Natural killer cell (primary cell): ENCODE measurements at regions of chr4 and their contacts with region 1.

Region 1: DNA sequence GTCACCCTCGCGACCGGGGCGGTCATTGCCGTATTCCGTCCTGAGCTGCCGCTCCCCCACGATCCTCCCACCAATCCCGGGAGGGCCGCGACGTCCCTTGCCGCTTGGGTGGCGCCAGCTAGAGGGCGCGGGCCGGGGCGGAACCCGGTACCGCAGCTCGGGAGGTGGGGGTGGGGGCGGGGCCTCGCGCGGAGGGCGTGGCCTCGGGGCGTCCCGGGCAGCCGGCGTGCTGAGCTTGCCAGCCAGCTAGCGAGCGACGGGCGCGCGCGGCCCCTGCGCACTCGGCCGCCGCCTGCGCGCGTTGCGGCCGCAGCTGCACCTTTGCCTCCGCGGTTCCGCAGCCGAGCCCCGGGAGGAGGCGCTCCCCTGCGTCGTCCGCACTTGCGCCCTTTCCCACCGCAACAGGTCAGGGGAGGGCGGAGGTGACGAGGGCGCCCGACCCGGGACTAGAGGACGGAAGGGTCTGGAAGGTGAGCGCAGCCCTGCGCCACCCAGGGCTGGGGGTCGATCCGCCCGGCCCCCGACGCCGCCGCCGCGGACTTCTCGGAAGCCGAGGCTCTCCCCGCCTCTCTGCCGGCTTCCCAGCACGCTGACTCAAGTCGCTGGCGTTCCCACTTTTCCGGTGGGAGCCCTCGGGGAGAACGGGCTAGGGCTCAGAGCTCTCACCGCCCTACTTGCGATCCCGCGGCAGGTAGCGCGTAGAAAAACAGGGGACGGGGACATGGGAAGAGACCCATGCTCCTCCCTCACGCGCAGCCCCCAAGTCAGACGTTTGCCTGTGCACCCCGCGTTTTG is at the start of gene AFF1:
- DNase-seq: peak; percentile 81 to 96
- ATAC-seq: peak; percentile 69 to 91 (median 85)
- H3K4me3 ChIP-seq: peak within 1 kb of the TSS; percentile 84
- H3K4me3 Mint-ChIP-seq: peak within 1 kb of the TSS; percentile 98
- H3K27ac ChIP-seq: peak within 1 kb of the TSS; percentile 84
- H3K27ac Mint-ChIP-seq: peak within 1 kb of the TSS; percentile 86 to 90
- H3K4me1 ChIP-seq: peaks cover 28% of the 10 kb centered on the region
- H3K4me1 Mint-ChIP-seq: peaks cover 44 to 54% of the 10 kb centered on the region in 2 donors
- H3K27me3 ChIP-seq: no peaks in the 10 kb centered on the region
- H3K27me3 Mint-ChIP-seq: no peaks in the 10 kb centered on the region
- CTCF ChIP-seq: no peak
- total RNA-seq, gene AFF1: 87.9 to 93.4 (median 91.7) TPM

Region 2: DNA sequence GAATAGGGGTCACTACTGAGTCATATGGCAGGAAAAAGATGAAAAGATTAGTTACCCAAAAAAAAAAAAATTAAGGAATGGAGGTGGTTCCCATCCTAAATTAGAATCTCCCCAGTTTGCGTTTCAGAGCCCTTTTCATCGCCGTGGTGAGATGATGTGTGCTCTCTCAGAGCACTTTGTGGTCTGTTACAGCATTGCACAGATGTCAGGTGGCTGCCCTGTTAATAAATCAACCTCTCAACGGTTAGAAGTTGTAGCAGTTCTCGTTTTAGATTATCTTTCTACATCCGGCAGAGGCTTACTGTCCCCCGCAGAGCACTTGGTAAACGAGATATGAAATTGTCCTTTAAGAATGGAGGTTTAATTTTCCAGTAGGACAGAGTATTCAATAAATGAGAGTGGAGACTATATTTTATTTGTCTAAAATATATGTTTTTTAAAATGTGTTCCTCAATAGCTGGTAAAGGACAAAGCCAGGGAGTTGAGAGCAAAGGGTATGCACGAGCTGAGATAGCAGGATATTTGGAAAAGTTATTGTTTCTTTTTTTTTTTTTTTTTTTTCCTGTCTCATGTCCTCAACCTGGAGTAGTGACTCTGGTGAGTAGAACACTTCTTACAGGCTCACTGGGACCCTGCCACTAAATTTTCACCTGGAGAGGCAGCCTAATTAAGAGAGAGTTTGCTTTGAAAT is 26.8 kb after region 1 on chr4:
- intact Hi-C with region 1: loop called (anchors 1 kb)
- DNase-seq: peak in 1 of 2 donors; percentile 33
- ATAC-seq: peak; percentile 91 to 99 (median 94)
- H3K4me3 ChIP-seq: no peak overlapping the region
- H3K4me3 Mint-ChIP-seq: peak overlapping the region; percentile 52
- H3K27ac ChIP-seq: peak overlapping the region; percentile 25
- H3K27ac Mint-ChIP-seq: peak overlapping the region; percentile 67 to 87
- H3K4me1 ChIP-seq: peaks cover 15% of the 10 kb centered on the region
- H3K4me1 Mint-ChIP-seq: peaks cover 19 to 28% of the 10 kb centered on the region in 2 donors
- H3K27me3 ChIP-seq: no peaks in the 10 kb centered on the region
- H3K27me3 Mint-ChIP-seq: no peaks in the 10 kb centered on the region
- CTCF ChIP-seq: no peak

Region 3: DNA sequence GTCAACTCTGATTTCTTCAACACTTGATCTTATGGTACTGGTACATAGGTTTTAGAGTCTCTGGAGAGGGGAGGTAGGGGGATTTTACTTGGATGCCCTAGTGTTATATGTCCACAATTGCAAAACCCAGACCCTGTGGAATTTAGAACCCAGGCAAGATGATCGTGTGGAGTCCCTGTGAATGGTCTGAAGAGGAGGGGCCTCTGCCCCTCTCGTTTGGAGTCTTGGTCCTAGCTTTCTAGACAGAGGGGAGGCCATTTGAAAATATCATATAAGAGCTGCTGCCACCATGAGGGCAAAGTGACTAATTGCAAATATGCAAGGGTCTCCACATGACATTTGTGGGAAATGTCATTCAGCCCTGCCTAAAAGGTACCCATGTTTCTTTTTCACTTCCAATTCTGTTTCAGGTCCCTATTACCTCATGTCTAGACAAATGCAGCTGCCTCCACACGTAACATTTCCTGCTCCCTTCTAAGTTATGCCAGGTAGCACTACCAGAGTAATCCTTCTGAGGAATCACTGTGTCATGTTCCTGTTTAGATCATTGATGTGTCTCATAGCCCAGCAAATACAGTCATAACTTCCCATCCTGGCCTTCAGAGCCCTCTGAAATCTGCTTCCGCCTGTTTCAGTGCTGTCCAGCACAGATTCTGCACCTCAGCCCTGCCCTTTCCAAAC is 158.6 kb after region 1 on chr4:
- intact Hi-C with region 1: loop called (anchors 5 kb)
- DNase-seq: peak in 1 of 2 donors; percentile 73
- ATAC-seq: peak; percentile 76 to 92 (median 81)
- H3K4me3 ChIP-seq: no peak overlapping the region
- H3K4me3 Mint-ChIP-seq: no peak overlapping the region
- H3K27ac ChIP-seq: no peak overlapping the region
- H3K27ac Mint-ChIP-seq: peak overlapping the region; percentile 26 to 66
- H3K4me1 ChIP-seq: no peaks in the 10 kb centered on the region
- H3K4me1 Mint-ChIP-seq: peaks cover 20 to 24% of the 10 kb centered on the region in 2 donors
- H3K27me3 ChIP-seq: no peaks in the 10 kb centered on the region
- H3K27me3 Mint-ChIP-seq: no peaks in the 10 kb centered on the region
- CTCF ChIP-seq: peak; percentile 62

Region 4: GRCh38 chr4:87220094-87220822 is 285.3 kb after region 1 on chr4 and contains the start of gene KLHL8:
- intact Hi-C with region 1: loop called (anchors 5 kb)
- DNase-seq: peak; percentile 85 to 93
- ATAC-seq: peak; percentile 90 to 98 (median 92)
- H3K4me3 ChIP-seq: peak within 1 kb of the TSS; percentile 98
- H3K4me3 Mint-ChIP-seq: peak within 1 kb of the TSS; percentile 94
- H3K27ac ChIP-seq: peak within 1 kb of the TSS; percentile 80
- H3K27ac Mint-ChIP-seq: peak within 1 kb of the TSS; percentile 87 to 91
- H3K4me1 ChIP-seq: peaks cover 18% of the 10 kb centered on the region
- H3K4me1 Mint-ChIP-seq: peaks cover 7 to 12% of the 10 kb centered on the region in 2 donors
- H3K27me3 ChIP-seq: no peaks in the 10 kb centered on the region
- H3K27me3 Mint-ChIP-seq: no peaks in the 10 kb centered on the region
- CTCF ChIP-seq: no peak
- total RNA-seq, gene KLHL8: 8.3 to 11.2 (median 9.1) TPM

Region 5: DNA sequence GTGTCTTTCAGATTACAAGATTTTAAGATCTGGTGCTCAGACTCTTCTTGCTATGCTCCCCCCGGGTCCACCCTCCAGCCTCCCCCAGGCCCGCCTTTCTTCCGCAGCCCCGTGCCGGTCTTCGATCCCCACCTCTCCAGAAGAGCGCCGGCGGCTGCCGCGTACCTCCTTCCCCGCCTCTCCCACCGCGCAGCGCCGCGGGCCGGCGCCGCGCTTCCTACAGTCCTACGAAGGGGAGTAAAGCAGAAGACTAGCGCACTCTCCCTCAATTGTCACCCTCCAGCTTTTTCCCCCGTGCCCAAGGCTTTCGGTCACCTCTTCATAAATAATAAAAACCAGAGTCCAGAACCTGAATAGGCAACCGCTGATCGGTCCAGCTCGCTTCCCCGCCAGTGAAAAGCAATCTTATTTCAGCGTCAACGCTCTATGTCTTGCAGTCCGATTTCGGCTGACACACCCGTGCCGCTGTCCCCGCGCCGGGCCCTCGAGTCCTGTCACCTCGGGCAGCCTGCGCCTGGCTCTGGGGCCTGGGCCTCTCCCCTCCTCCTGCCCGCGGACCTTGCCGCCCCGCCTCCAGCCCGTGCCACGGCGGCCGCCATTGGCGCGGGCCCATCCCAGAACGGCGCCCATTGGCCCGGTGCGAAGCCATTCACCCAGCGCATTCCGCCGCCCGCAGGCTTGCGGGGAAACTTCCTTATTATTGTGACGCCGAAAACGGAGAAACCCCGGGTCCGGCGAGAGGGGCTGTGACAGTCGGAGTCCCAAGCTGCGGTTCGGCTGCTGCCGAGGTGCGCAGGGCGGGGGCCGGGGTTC is 1657.0 kb after region 1 on chr4 and contains the start of gene HERC3:
- intact Hi-C with region 1: loop called (anchors 5 kb)
- DNase-seq: peak; percentile 91 to 93
- ATAC-seq: peak; percentile 85 to 97 (median 91)
- H3K4me3 ChIP-seq: peak within 1 kb of the TSS; percentile 100
- H3K4me3 Mint-ChIP-seq: peak within 1 kb of the TSS; percentile 96
- H3K27ac ChIP-seq: peak within 1 kb of the TSS; percentile 90
- H3K27ac Mint-ChIP-seq: peak within 1 kb of the TSS; percentile 91 to 97
- H3K4me1 ChIP-seq: peaks cover 6% of the 10 kb centered on the region
- H3K4me1 Mint-ChIP-seq: peaks cover 29 to 30% of the 10 kb centered on the region in 2 donors
- H3K27me3 ChIP-seq: no peaks in the 10 kb centered on the region
- H3K27me3 Mint-ChIP-seq: no peaks in the 10 kb centered on the region
- CTCF ChIP-seq: no peak
- total RNA-seq, gene HERC3: 59.1 to 85.0 (median 61.9) TPM